ENCODE measurements at regions of chr1 and their contacts with region 1.

Region 1: GRCh38 chr1:93437976-93438605 is 9.8 kb upstream of the FNBP1L start:
- DNase-seq: no peak
- H3K4me3 Mint-ChIP-seq: no peak overlapping the region
- H3K27ac Mint-ChIP-seq: no peak overlapping the region
- H3K4me1 Mint-ChIP-seq: no peaks in the 10 kb centered on the region
- H3K27me3 Mint-ChIP-seq: peaks cover 4% of the 10 kb centered on the region

Region 2: GRCh38 chr1:91864017-91864700 is 1573.9 kb before region 1 on chr1:
- CTCF ChIA-PET with region 1: no interaction called
- intact Hi-C with region 1: no loop called
- DNase-seq: no peak
- H3K4me3 Mint-ChIP-seq: no peak overlapping the region
- H3K27ac Mint-ChIP-seq: no peak overlapping the region
- H3K4me1 Mint-ChIP-seq: peaks cover 3% of the 10 kb centered on the region
- H3K27me3 Mint-ChIP-seq: no peaks in the 10 kb centered on the region

Region 3: GRCh38 chr1:93021539-93022134 is 416.5 kb before region 1 on chr1:
- CTCF ChIA-PET with region 1: no interaction called
- intact Hi-C with region 1: loop called (anchors 5 kb)
- DNase-seq: no peak
- H3K4me3 Mint-ChIP-seq: no peak overlapping the region
- H3K27ac Mint-ChIP-seq: no peak overlapping the region
- H3K4me1 Mint-ChIP-seq: no peaks in the 10 kb centered on the region
- H3K27me3 Mint-ChIP-seq: peaks cover 1% of the 10 kb centered on the region

Region 4: DNA sequence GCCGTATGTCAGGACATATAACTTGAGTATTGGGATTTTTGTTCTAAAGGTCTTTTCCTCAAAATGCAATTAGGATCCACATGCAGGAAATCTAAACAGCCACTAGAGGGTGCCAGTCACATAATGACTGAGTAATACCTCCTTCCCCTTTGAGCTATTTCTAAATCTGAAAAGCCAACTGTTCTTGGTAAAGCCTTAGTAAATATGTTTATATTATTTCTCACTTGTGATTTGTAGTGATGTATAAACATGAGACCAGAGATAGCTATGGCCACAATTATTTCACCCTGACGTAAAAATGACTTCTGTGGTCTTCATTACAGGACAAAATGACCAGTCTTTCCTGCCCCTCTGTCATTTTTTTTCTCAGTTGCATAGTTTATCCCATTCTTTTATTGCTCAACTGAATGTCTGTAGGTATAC is 133.4 kb before region 1 on chr1:
- CTCF ChIA-PET with region 1: interaction called, 10 read pairs
- intact Hi-C with region 1: loop called (anchors 2 kb)
- DNase-seq: peak; percentile 67
- H3K4me3 Mint-ChIP-seq: no peak overlapping the region
- H3K27ac Mint-ChIP-seq: no peak overlapping the region
- H3K4me1 Mint-ChIP-seq: no peaks in the 10 kb centered on the region
- H3K27me3 Mint-ChIP-seq: no peaks in the 10 kb centered on the region

Region 5: DNA sequence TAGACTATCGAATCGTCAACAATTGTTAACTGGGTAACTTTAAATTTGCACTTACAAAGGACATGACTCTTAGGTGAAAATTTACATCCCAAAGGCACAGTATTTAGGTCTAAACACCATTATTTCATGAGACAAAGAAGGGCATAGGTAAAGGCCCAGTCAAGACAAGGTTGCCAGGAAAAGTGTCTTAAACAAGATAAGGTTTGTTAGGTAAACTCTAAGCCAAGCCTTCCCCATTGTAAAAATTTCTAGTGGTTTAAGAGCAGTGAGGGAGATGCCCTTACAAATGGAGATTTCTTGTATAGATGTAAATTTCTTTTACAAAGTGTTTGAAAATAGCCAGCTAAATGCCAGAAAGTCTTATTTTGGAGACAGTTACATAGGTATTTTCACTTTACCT is 27.1 kb before region 1 on chr1:
- CTCF ChIA-PET with region 1: no interaction called
- intact Hi-C with region 1: no loop called
- DNase-seq: no peak
- H3K4me3 Mint-ChIP-seq: no peak overlapping the region
- H3K27ac Mint-ChIP-seq: no peak overlapping the region
- H3K4me1 Mint-ChIP-seq: no peaks in the 10 kb centered on the region
- H3K27me3 Mint-ChIP-seq: peaks cover 5% of the 10 kb centered on the region

Region 6: DNA sequence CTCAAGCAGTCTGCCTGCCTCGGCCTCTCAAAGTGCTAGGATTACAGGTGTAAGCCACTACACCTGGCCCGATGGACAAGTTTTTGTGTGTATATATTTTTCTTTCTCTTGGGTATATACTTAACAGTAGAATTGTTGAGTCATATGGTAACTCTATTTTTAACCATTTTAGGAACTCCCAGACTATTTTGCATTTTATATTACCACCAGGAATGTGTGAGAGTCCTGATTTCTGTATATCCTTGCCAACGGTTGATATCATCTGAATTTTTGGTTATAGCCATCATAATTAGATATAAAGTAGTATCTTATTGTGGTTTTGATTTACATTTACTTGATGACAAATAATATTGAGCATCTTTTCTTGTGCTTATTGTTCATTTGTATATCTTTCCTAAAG is 30.6 kb after region 1 on chr1:
- CTCF ChIA-PET with region 1: no interaction called
- intact Hi-C with region 1: no loop called
- DNase-seq: no peak
- H3K4me3 Mint-ChIP-seq: no peak overlapping the region
- H3K27ac Mint-ChIP-seq: no peak overlapping the region
- H3K4me1 Mint-ChIP-seq: no peaks in the 10 kb centered on the region
- H3K27me3 Mint-ChIP-seq: peaks cover 2% of the 10 kb centered on the region

Region 7: DNA sequence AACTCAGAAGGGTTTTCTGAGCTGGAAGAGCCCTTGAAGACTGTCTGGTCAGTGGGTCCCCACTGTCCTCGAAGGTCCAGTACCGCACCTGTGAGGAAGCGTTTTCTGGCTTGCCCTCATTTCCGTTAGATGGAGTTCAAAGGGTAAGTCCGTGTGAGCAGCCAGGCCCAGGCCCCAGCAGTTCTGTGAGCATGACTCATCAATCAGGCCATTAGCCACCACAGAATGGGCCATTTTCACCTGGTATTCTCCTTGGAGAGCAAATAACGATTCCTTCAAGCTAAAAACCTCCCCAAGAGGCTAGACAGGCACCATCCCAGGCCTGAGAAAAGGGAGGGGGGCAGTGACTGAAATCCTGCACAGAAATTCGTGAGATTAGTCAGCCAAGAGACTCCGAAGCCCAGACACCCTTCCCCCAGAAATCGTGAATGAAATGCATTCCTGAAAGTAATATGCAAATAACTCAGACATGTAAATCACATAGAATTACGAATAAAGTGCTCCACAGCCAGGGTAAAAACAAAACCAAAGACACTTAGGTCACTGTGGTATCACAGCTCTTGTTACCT is 177.6 kb after region 1 on chr1:
- CTCF ChIA-PET with region 1: no interaction called
- intact Hi-C with region 1: loop called (anchors 1 kb)
- DNase-seq: peak; percentile 76
- H3K4me3 Mint-ChIP-seq: no peak overlapping the region
- H3K27ac Mint-ChIP-seq: no peak overlapping the region
- H3K4me1 Mint-ChIP-seq: peaks cover 17% of the 10 kb centered on the region
- H3K27me3 Mint-ChIP-seq: peaks cover 3% of the 10 kb centered on the region

Region 8: GRCh38 chr1:93680757-93681550 is 242.9 kb after region 1 on chr1:
- CTCF ChIA-PET with region 1: no interaction called
- intact Hi-C with region 1: loop called (anchors 5 kb)
- DNase-seq: peak; percentile 71
- H3K4me3 Mint-ChIP-seq: peak overlapping the region; percentile 76
- H3K27ac Mint-ChIP-seq: no peak overlapping the region
- H3K4me1 Mint-ChIP-seq: peaks cover 9% of the 10 kb centered on the region
- H3K27me3 Mint-ChIP-seq: peaks cover 52% of the 10 kb centered on the region

Region 9: GRCh38 chr1:93749894-93750301 is 311.8 kb after region 1 on chr1:
- CTCF ChIA-PET with region 1: no interaction called
- intact Hi-C with region 1: no loop called
- DNase-seq: peak; percentile 28
- H3K4me3 Mint-ChIP-seq: no peak overlapping the region
- H3K27ac Mint-ChIP-seq: no peak overlapping the region
- H3K4me1 Mint-ChIP-seq: peaks cover 14% of the 10 kb centered on the region
- H3K27me3 Mint-ChIP-seq: peaks cover 10% of the 10 kb centered on the region

Region 10: GRCh38 chr1:93814059-93814794 is 376.1 kb after region 1 on chr1:
- CTCF ChIA-PET with region 1: interaction called, 7 read pairs
- intact Hi-C with region 1: loop called (anchors 1 kb)
- DNase-seq: peak; percentile 74
- H3K4me3 Mint-ChIP-seq: no peak overlapping the region
- H3K27ac Mint-ChIP-seq: no peak overlapping the region
- H3K4me1 Mint-ChIP-seq: peaks cover 19% of the 10 kb centered on the region
- H3K27me3 Mint-ChIP-seq: no peaks in the 10 kb centered on the region

Region 11: DNA sequence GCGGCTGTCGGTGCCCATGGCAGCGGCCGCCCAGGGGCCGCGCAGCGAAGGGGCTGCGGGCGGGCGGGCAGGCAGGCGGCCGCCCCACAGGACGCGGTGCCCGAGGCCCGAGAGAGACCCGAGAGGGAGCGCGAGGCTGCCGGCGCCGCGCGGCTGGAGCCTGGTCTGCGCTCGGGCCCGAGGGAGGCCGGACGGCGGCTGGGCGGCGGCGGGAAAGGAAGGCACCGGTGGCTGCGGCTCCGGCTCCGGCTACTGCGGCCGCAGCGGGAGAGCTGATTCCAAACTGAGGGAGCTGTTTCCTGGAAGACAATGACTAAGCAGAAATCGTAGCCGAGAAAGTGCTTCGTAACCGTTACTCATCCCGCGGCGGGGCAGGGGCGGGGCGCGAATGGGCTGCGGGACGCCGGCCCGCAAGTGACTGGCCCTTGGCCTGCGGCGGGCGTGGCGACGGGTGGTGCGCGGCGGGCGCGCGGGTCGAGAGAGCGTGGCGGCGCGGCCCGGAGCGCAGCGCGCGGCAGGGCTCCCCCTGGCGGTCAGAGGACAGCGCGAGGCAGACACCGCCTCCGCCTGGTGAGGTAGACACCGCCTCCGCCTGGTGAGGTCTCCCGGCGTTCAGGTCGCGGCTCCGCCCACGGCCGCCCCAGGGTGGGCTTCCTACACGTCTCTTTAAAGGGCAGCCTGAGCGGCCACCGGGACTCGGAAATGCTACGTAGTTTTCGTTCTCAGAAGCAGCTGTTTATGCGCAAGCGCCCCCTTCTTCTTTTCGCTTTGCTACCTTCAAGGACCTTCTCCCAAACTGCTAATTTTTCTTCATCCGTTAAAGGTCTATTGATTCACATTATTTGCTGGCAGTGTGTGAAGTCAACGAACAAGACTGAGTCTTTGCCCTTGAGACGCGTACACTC is 471.3 kb after region 1 on chr1 and contains the start of gene GCLM:
- CTCF ChIA-PET with region 1: no interaction called
- intact Hi-C with region 1: loop called (anchors 1 kb)
- DNase-seq: peak; percentile 88
- H3K4me3 Mint-ChIP-seq: peak within 1 kb of the TSS; percentile 82
- H3K27ac Mint-ChIP-seq: peak within 1 kb of the TSS; percentile 87
- H3K4me1 Mint-ChIP-seq: peaks cover 27% of the 10 kb centered on the region
- H3K27me3 Mint-ChIP-seq: no peaks in the 10 kb centered on the region
- total RNA-seq, gene GCLM: 19.5 to 22.7 TPM